ENCODE measurements at regions of chr7 and their contacts with region 1.

Region 1: DNA sequence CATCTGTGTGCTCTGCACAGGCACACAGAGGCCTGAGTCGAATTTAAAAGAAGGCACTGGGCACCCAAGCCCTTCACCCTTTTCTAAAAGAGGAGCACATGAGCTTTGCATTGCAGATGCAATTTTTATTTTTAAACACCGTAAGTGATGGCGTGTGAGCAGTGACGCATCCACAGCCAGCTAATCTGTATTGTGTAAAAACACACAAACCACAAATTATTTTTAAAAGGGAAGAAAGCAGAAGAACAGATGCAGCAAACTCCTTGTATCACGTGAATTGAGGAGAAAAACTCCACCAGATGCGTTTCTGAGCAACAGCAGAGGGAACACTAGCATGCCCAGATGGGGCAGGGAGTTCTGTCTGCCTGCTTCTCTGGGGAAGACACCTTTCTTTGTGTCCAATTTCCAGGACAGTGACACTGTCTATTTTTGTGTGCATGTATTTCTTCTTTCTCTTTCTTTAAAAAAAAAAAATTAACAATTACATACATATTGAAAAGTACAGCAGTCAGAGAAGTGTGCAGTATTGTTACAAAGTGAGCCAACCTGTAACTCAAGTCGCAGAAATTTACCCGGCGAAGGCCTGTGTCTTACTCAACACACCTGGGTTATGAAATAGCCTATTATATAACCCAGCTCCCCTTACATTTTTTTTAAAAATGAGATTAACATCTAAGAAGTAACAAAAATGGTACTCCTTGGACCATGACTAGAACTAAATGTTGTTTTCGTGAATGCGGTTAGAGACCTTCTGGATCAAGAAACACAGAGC is 39.2 kb downstream of the EEPD1 start:
- DNase-seq: peak; percentile 93 to 97 (median 96)
- H3K4me3 ChIP-seq: peak overlapping the region in 1 of 3 experiments; percentile 38
- H3K4me3 Mint-ChIP-seq: peak overlapping the region; percentile 51 to 67
- H3K27ac ChIP-seq: peak overlapping the region; percentile 76 to 96
- H3K27ac Mint-ChIP-seq: peak overlapping the region; percentile 95 to 98 (median 96)
- H3K4me1 ChIP-seq: peaks cover 47% of the 10 kb centered on the region in 2 donors
- H3K4me1 Mint-ChIP-seq: peaks cover 60% of the 10 kb centered on the region
- H3K27me3 ChIP-seq: no peaks in the 10 kb centered on the region
- H3K27me3 Mint-ChIP-seq: peaks cover 0 to 9% (median 1%) of the 10 kb centered on the region in 3 donors
- CTCF ChIP-seq: peak; percentile 6

Region 2: DNA sequence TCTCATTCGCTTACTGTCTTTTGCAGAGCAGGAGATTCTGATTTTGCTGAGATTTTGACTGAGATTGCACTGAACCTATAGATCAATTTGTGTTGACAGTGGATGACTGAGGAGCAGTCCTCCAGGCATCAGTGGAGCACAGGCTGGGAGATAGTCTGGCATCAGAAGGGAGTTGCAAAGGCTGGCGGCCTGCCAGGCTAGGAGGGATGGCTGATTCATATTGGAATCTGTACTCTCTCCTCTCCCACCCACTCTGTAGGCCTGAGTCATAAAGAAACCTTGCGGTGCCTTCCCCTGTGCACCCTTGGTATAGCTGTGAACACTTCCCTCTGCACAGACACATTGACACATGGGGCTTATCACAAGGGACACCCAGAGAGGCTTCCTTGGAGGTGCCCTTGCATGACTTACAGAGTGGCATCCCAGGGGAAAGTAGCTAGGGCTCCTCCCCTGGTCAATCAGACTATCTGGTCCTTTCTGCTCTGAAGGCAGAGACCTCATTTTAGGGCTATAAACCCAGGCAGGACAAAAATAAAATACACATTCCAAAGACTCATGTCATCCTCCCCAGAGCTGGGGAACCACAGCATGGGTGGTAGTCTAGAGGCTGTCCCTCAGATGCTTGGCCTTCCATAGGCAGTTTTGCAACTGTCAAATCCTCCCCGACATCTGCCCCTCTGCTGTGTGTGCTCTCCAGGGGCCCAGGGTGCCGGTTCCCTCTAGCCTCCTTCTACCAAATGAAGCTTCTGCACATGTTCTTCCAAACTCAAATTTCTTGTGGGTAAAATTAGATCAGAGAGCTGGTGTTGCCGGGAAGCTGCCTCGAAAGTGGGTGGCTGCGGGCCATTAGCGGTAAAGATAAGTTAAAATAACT is 76.6 kb before region 1 on chr7:
- intact Hi-C with region 1: loop called (anchors 5 to 10 kb)
- DNase-seq: peak; percentile 88 to 92 (median 88)
- H3K4me3 ChIP-seq: no peak overlapping the region
- H3K4me3 Mint-ChIP-seq: no peak overlapping the region
- H3K27ac ChIP-seq: peak overlapping the region in 1 of 2 donors; percentile 63
- H3K27ac Mint-ChIP-seq: peak overlapping the region; percentile 71 to 87 (median 84)
- H3K4me1 ChIP-seq: peaks cover 44 to 56% of the 10 kb centered on the region in 2 donors
- H3K4me1 Mint-ChIP-seq: peaks cover 54% of the 10 kb centered on the region
- H3K27me3 ChIP-seq: no peaks in the 10 kb centered on the region
- H3K27me3 Mint-ChIP-seq: peaks cover 0 to 2% (median 2%) of the 10 kb centered on the region in 3 donors
- CTCF ChIP-seq: no peak

Region 3: DNA sequence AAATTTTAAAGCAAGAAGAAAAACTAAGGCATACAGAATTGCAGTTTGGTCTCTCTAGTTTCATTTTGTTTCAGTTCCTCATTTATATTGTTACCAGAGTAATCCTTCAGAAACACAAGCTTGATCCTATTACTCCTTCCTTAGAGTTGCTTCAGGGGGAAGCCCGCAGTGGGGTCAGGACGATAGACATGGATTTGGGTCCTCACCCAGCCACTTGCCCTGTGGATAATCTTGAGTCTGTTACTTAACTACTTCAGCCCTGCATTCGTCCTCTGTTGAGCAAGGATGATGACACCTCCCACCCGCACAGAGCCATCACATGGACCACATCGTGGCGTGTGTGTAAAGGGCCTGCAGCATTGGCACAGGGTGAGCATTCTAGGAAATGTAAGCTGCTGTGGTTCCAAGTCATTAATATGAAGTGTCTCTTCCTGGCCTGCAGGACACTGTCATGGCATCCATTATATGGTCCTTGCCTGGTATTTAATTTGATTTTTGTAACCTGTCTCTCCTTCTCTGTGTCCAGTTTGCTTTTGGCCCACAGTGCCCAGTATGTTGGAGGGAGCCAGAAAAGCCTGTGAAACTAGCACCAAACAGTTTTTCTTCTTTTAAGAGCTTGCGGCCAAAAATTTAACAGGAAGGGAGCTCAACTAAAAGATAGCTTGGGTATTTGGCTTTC is 72.0 kb after region 1 on chr7:
- intact Hi-C with region 1: loop called in 1 of 2 experiments (anchors 5 kb)
- DNase-seq: peak; percentile 88 to 96 (median 92)
- H3K4me3 ChIP-seq: peak overlapping the region in 1 of 3 experiments; percentile 52
- H3K4me3 Mint-ChIP-seq: peak overlapping the region; percentile 50 to 73
- H3K27ac ChIP-seq: peak overlapping the region; percentile 90 to 93
- H3K27ac Mint-ChIP-seq: peak overlapping the region; percentile 98 to 100 (median 99)
- H3K4me1 ChIP-seq: peaks cover 67 to 75% of the 10 kb centered on the region in 2 donors
- H3K4me1 Mint-ChIP-seq: peaks cover 78% of the 10 kb centered on the region
- H3K27me3 ChIP-seq: no peaks in the 10 kb centered on the region
- H3K27me3 Mint-ChIP-seq: peaks cover 1 to 3% (median 2%) of the 10 kb centered on the region in 3 donors
- CTCF ChIP-seq: no peak

Region 4: DNA sequence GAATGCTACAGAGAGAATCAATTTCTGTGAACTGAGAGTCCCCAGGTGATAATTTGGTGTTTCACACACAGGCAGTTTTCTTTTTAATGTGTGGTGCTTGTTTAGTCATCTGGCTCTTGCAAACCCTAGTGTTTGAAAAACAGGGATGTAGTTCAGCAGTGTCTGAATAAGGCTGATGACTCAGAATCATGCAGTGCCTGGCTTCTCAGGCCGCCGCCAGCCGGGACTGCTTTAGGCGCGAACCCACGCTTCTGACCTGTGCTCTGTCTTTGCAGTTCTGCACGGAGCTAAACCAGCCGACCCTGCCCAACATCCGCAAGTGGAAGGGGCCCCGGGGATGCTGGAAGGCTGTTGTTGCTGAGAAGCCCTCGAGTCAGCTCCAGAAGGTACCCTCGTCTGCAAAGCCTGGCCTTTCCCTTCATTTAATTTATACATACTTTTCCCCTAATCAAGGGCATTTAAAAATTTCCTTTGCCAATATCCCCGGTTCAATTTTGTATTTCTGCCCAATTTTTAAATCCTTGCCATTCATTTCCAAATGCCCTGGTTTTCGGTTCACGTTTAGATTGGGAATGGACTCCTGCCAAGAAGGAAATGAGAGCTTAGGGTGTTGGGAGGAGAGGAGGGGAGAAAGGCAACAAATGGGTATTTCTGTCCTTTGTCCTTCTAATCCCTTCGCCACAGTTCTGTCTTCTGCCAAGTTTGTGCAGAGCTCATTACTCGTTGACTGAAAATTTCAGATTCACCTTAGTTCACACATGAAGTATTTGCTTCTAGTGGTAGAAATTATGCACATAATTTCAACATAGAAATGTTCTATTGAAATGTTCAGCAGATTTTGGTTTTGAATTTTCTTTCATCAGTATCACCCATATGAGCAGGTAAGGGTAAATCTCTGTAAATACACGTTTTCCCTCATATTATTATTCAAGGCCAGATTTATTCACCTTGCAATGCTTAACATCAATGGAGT is 88.9 kb after region 1 on chr7:
- intact Hi-C with region 1: loop called (anchors 1 to 5 kb)
- DNase-seq: peak; percentile 90 to 95 (median 91)
- H3K4me3 ChIP-seq: no peak overlapping the region
- H3K4me3 Mint-ChIP-seq: peak overlapping the region in 1 of 2 donors; percentile 71
- H3K27ac ChIP-seq: peak overlapping the region; percentile 36 to 90
- H3K27ac Mint-ChIP-seq: peak overlapping the region; percentile 83 to 98 (median 90)
- H3K4me1 ChIP-seq: peaks cover 57 to 67% of the 10 kb centered on the region in 2 donors
- H3K4me1 Mint-ChIP-seq: peaks cover 62% of the 10 kb centered on the region
- H3K27me3 ChIP-seq: no peaks in the 10 kb centered on the region
- H3K27me3 Mint-ChIP-seq: peaks cover 0 to 5% (median 2%) of the 10 kb centered on the region in 3 donors
- CTCF ChIP-seq: no peak